Spleen (tissue), 13 donors: ENCODE measurements at regions of chr1 and their contacts with region 1.

Region 1: GRCh38 chr1:62175568-62176179 is 19.0 kb upstream of the L1TD1 start:
- DNase-seq: peak; percentile 12
- H3K4me3 ChIP-seq: no peak overlapping the region
- H3K27ac ChIP-seq: no peak overlapping the region
- H3K4me1 ChIP-seq: no peaks in the 10 kb centered on the region
- H3K27me3 ChIP-seq: peaks cover 0 to 10% (median 0%) of the 10 kb centered on the region in 7 donors
- CTCF ChIP-seq: peak; percentile 13 to 72 (median 58)
- POLR2A ChIP-seq: no peak

Region 2: DNA sequence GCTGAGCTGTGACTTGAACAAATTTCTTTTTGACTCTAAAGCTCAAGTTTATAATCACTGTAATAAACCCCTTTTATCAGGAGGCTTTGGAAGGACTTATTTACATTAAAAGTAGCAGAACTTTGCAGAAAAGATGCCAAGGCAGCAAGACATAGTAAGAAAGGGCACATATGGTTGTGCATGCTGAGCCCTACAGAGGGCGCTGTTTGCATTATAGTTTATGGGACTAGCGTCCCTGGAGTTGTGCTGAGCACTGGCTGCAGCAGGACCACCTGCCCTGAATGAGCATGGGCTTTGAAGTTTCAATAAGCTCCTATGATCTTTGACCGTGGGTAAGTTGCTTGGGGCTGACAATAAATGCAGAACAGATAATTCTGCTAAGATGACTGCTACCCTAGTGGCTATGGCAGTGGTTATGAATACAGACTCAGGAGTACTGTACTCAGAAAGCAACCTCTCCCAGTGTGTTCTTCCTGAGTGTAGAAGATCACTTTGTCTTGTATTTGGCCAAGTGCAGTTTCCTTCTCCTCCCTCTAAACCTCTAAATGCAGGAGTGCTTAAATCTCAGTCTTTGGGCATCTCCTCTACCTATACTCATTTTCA is 215.8 kb after region 1 on chr1:
- intact Hi-C with region 1: no loop called
- DNase-seq: no peak
- H3K4me3 ChIP-seq: no peak overlapping the region
- H3K27ac ChIP-seq: no peak overlapping the region
- H3K4me1 ChIP-seq: no peaks in the 10 kb centered on the region
- H3K27me3 ChIP-seq: peaks cover 0 to 18% (median 0%) of the 10 kb centered on the region in 7 donors
- CTCF ChIP-seq: peak in 5 of 11 experiments; percentile 5 to 46 (median 30)
- POLR2A ChIP-seq: no peak

Region 3: DNA sequence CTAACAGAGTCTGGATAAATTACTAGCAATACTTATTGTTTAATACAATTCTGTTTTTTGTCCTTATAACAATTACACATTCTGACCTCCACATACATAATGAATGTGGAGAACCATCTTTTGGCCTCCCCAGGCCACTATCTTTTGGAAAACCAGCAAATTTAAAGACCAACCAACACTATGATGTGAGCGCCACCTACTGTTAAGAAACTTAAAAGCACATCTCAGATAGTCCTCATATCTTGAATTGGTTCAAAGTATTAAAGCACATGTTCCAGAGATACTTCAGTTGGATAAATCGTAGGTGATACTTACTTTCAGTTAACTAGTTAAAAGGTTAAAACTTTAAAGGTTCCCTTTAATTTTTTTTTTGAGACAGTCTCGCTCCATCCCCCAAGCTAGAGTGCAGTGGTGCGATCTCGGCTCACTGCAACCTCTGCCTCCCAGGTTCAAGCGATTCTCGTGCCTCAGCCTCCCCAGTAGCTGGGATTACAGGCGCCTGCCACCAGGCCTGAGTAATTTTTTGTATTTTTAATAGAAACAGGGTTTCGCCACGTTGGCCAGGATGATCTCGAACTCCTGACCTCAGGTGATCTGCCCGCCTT is 231.8 kb after region 1 on chr1:
- intact Hi-C with region 1: loop called (anchors 2 kb)
- DNase-seq: no peak
- H3K4me3 ChIP-seq: no peak overlapping the region
- H3K27ac ChIP-seq: no peak overlapping the region
- H3K4me1 ChIP-seq: no peaks in the 10 kb centered on the region
- H3K27me3 ChIP-seq: no peaks in the 10 kb centered on the region
- CTCF ChIP-seq: peak in 10 of 11 experiments; percentile 24 to 80 (median 68)
- POLR2A ChIP-seq: no peak